BJ (cell line): ENCODE measurements at regions of chr10 and their contacts with region 1.

Region 1: GRCh38 chr10:25113191-25114035 is 61.4 kb upstream of the GPR158 start:
- DNase-seq: no peak
- H3K4me3 ChIP-seq: no peak overlapping the region
- H3K27me3 ChIP-seq: no peaks in the 10 kb centered on the region
- CTCF ChIP-seq: peak; percentile 88

Region 2: DNA sequence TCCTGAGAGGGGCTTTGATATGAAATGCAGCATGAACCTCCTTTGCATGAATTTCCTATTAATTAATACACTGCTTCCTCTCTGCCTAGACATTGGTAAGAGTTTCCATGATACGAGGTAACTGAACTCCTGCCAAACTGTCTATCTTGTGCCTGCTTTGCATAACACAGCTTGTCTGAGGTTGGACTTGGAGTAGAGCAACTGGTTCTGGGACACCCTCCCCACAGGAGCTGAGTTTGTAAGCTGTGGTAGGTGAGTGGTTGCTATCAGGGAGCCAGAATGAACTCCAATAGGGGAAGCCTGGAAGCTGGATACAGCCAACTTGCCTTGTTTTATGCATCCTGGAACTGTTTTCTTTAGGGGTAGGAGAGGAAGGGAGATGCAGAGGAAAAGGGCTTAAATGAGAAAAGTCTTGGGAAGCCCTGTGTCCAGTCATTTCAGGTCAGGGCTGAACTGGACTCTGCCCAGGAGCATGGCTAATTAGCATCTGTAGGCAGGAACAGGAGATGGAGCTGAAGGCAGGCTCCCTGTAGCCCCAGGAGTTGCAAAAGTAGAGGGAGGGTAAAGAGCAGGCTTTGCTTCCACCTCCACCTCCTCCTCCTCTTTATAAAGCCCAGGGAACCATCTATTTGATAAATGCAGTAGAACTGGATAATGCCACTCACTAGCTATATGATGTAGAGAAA is 11.8 kb before region 1 on chr10:
- CTCF ChIA-PET with region 1: interaction called, 22 read pairs
- POLR2A ChIA-PET with region 1: no interaction called
- DNase-seq: no peak
- H3K4me3 ChIP-seq: no peak overlapping the region
- H3K27me3 ChIP-seq: peaks cover 2% of the 10 kb centered on the region; the same call in 1 of the 2 replicates
- CTCF ChIP-seq: no peak

Region 3: GRCh38 chr10:25226775-25227682 is 113.6 kb after region 1 on chr10:
- CTCF ChIA-PET with region 1: interaction called, 30 read pairs
- POLR2A ChIA-PET with region 1: no interaction called
- DNase-seq: no peak
- H3K4me3 ChIP-seq: no peak overlapping the region
- H3K27me3 ChIP-seq: no peaks in the 10 kb centered on the region
- CTCF ChIP-seq: peak; percentile 78